ENCODE measurements at regions of chr5 and their contacts with region 1.

Region 1: DNA sequence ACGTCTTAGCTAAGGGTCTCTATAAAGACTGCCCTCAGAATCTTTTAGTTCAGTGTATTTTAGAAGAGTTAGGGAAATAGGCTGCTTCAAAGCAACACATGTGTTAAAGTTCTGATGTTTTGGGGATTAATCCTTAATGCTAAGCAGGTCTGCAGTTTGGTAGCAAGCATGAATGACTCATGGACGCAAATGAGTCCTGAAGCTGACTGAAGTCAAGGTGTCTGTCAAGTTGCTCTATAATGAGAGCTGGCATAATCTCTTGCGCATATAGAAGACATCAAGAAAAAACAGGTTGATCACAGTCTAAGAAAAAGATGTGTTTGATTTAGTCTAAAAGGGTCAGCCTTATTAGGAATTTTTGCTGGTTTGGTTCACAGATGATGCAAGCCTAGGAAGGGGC is 630.1 kb downstream of the CDH12 start:
- DNase-seq: no peak
- H3K4me3 Mint-ChIP-seq: no peak overlapping the region
- H3K27ac Mint-ChIP-seq: no peak overlapping the region
- H3K4me1 Mint-ChIP-seq: no peaks in the 10 kb centered on the region
- H3K27me3 Mint-ChIP-seq: no peaks in the 10 kb centered on the region
- CTCF ChIP-seq: no peak

Region 2: GRCh38 chr5:21810737-21811316 is 412.3 kb before region 1 on chr5:
- CTCF ChIA-PET with region 1: no interaction called
- POLR2A ChIA-PET with region 1: no interaction called
- intact Hi-C with region 1: loop called (anchors 10 kb)
- DNase-seq: peak; percentile 40
- H3K4me3 Mint-ChIP-seq: no peak overlapping the region
- H3K27ac Mint-ChIP-seq: no peak overlapping the region
- H3K4me1 Mint-ChIP-seq: peaks cover 37% of the 10 kb centered on the region
- H3K27me3 Mint-ChIP-seq: no peaks in the 10 kb centered on the region
- CTCF ChIP-seq: peak; percentile 47

Region 3: GRCh38 chr5:22079566-22079965 is 143.5 kb before region 1 on chr5:
- CTCF ChIA-PET with region 1: no interaction called
- POLR2A ChIA-PET with region 1: no interaction called
- intact Hi-C with region 1: no loop called
- DNase-seq: no peak
- H3K4me3 Mint-ChIP-seq: no peak overlapping the region
- H3K27ac Mint-ChIP-seq: no peak overlapping the region
- H3K4me1 Mint-ChIP-seq: no peaks in the 10 kb centered on the region
- H3K27me3 Mint-ChIP-seq: no peaks in the 10 kb centered on the region
- CTCF ChIP-seq: no peak